IMR-90 (cell line): ENCODE measurements at regions of chr14 and their contacts with region 1.

Region 1: GRCh38 chr14:29846339-29847055 is 81.2 kb downstream of the PRKD1 start:
- DNase-seq: peak; percentile 69
- ATAC-seq: no peak
- H3K4me3 ChIP-seq: no peak overlapping the region
- H3K27ac ChIP-seq: no peak overlapping the region
- H3K4me1 ChIP-seq: no peaks in the 10 kb centered on the region
- H3K27me3 ChIP-seq: no peaks in the 10 kb centered on the region
- CTCF ChIP-seq: no peak
- POLR2A ChIP-seq: no peak
- RAD21 ChIP-seq: no peak

Region 2: DNA sequence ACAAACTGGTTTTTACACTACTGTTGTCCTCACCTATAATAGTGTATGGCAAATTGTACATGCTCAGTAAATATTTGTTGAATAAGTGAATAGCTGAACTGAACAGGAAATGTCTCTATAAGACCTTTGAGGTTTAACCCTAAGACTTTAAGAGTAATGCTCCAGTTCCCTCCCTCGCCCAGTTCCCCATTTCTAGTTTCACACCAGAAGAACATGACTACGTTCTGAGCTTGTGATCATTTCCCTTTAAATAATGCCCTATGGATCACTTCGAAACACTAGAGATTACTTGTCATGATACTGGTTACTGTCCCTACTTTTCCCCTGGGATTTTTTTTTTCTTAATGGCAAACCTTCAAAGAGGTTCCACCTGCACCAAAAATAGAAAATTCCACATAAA is 11.8 kb after region 1 on chr14:
- CTCF ChIA-PET with region 1: interaction called, 3 read pairs
- POLR2A ChIA-PET with region 1: interaction called, 3 read pairs
- dilution Hi-C with region 1: no loop called
- in situ Hi-C with region 1: no loop called
- intact Hi-C with region 1: loop called (anchors 1 kb)
- DNase-seq: no peak
- ATAC-seq: no peak
- H3K4me3 ChIP-seq: no peak overlapping the region
- H3K27ac ChIP-seq: no peak overlapping the region
- H3K4me1 ChIP-seq: no peaks in the 10 kb centered on the region; the same call in 1 of the 2 replicates
- H3K27me3 ChIP-seq: no peaks in the 10 kb centered on the region
- CTCF ChIP-seq: no peak
- POLR2A ChIP-seq: no peak
- RAD21 ChIP-seq: no peak

Region 3: DNA sequence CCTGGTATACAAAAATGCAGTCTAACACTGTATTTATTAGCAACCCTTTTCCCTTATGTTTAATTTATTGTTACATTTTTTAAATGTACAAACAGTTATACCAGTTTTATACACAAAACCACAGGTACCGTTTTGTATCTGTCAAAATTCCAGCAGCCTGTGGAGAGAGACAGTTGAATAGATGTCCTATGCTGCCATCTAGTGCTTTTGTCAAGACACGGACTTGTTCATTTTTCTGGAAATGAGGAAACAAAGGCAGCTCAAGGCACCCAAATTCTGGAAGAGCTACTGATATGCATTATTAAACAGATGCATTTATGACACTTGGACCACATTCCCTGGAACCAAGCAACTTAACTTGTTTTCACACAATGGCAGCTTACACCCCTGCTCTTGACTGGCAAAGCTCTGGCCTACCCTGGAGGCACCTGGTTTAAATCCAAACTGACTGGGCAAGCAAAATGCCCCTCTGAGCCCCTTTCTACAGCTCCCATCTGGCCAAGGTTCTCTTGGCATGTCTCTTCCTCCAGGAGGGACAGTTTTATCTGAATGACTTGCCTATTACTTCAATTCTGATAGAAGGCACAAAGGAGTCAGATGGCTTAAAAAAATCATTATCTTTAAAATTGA is 368.1 kb after region 1 on chr14:
- CTCF ChIA-PET with region 1: no interaction called
- POLR2A ChIA-PET with region 1: no interaction called
- dilution Hi-C with region 1: no loop called
- in situ Hi-C with region 1: no loop called
- intact Hi-C with region 1: no loop called
- DNase-seq: peak; percentile 85
- ATAC-seq: peak; percentile 77
- H3K4me3 ChIP-seq: no peak overlapping the region
- H3K27ac ChIP-seq: no peak overlapping the region
- H3K4me1 ChIP-seq: peaks cover 13% of the 10 kb centered on the region
- H3K27me3 ChIP-seq: no peaks in the 10 kb centered on the region
- CTCF ChIP-seq: peak; percentile 88
- POLR2A ChIP-seq: peak; percentile 35; the same call in 1 of the 2 replicates
- RAD21 ChIP-seq: peak; percentile 93